ENCODE measurements at regions of chrX and their contacts with region 1.

Region 1: GRCh38 chrX:17706676-17707075 is 30.6 kb upstream of the SCML1 start:
- DNase-seq: peak; percentile 70
- H3K4me3 ChIP-seq: no peak overlapping the region
- H3K27ac ChIP-seq: no peak overlapping the region
- H3K4me1 ChIP-seq: peaks cover 24% of the 10 kb centered on the region
- H3K27me3 ChIP-seq: no peaks in the 10 kb centered on the region
- CTCF ChIP-seq: no peak

Region 2: GRCh38 chrX:17736856-17737706 is 30.4 kb after region 1 on chrX and contains the start of gene SCML1:
- CTCF ChIA-PET with region 1: no interaction called
- dilution Hi-C with region 1: no loop called
- in situ Hi-C with region 1: no loop called
- intact Hi-C with region 1: loop called (anchors 2 kb)
- DNase-seq: peak; percentile 92
- H3K4me3 ChIP-seq: peak within 1 kb of the TSS; percentile 63 to 71 (median 69)
- H3K27ac ChIP-seq: peak within 1 kb of the TSS; percentile 81
- H3K4me1 ChIP-seq: no peaks in the 10 kb centered on the region
- H3K27me3 ChIP-seq: no peaks in the 10 kb centered on the region
- CTCF ChIP-seq: no peak
- total RNA-seq, gene SCML1: 11.8 to 13.4 TPM

Measured in mammary epithelial cell (primary cell).